Ovary (tissue), 10 donors: ENCODE measurements at regions of chr9 and their contacts with region 1.

Region 1: GRCh38 chr9:71819115-71819739 is 50.9 kb upstream of the CEMIP2 start:
- DNase-seq: peak in 4 of 5 donors; percentile 24 to 47 (median 30)
- H3K4me3 ChIP-seq: no peak overlapping the region
- H3K27ac ChIP-seq: no peak overlapping the region
- H3K4me1 ChIP-seq: peaks cover 9% of the 10 kb centered on the region
- H3K27me3 ChIP-seq: no peaks in the 10 kb centered on the region
- CTCF ChIP-seq: peak; percentile 59 to 66 (median 63)
- EP300 ChIP-seq: no peak
- POLR2A ChIP-seq: no peak

Region 2: DNA sequence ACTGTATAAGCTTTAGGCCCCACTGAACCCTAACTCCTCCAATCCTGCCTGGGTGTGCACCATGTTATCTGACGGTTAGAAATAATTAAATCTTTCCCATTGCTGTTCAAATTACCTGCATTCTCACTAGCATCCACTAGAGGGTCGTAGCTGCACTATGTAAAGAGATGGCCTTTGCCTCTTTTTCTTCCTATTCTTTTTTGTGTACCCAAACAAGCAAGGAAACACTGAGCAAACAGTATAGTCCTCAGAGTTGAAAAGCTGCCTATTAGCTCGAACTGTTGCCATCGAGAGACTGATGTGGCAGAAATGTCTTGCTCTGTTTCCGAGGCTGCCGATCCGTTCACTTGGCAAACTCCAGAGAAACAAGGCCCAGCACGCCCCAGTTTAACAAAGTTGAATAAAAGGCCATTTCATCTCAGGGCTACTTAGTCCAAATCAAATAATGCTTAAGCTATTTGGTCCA is 534.0 kb before region 1 on chr9:
- intact Hi-C with region 1: loop called in 1 of 4 experiments (anchors 10 kb)
- DNase-seq: no peak
- H3K4me3 ChIP-seq: no peak overlapping the region
- H3K27ac ChIP-seq: no peak overlapping the region
- H3K4me1 ChIP-seq: no peaks in the 10 kb centered on the region
- H3K27me3 ChIP-seq: no peaks in the 10 kb centered on the region
- CTCF ChIP-seq: peak; percentile 32 to 52 (median 46)
- EP300 ChIP-seq: no peak
- POLR2A ChIP-seq: no peak

Region 3: GRCh38 chr9:71562140-71562539 is 257.1 kb before region 1 on chr9:
- intact Hi-C with region 1: no loop called
- DNase-seq: no peak
- H3K4me3 ChIP-seq: no peak overlapping the region
- H3K27ac ChIP-seq: no peak overlapping the region
- H3K4me1 ChIP-seq: no peaks in the 10 kb centered on the region
- H3K27me3 ChIP-seq: no peaks in the 10 kb centered on the region
- CTCF ChIP-seq: no peak
- EP300 ChIP-seq: no peak
- POLR2A ChIP-seq: no peak

Region 4: GRCh38 chr9:71604197-71605063 is 214.8 kb before region 1 on chr9:
- intact Hi-C with region 1: loop called in 1 of 4 experiments (anchors 10 kb)
- DNase-seq: peak; percentile 51 to 68 (median 59)
- H3K4me3 ChIP-seq: no peak overlapping the region
- H3K27ac ChIP-seq: no peak overlapping the region
- H3K4me1 ChIP-seq: peaks cover 4% of the 10 kb centered on the region
- H3K27me3 ChIP-seq: no peaks in the 10 kb centered on the region
- CTCF ChIP-seq: peak in 2 of 3 donors; percentile 25 to 31
- EP300 ChIP-seq: no peak
- POLR2A ChIP-seq: no peak

Region 5: DNA sequence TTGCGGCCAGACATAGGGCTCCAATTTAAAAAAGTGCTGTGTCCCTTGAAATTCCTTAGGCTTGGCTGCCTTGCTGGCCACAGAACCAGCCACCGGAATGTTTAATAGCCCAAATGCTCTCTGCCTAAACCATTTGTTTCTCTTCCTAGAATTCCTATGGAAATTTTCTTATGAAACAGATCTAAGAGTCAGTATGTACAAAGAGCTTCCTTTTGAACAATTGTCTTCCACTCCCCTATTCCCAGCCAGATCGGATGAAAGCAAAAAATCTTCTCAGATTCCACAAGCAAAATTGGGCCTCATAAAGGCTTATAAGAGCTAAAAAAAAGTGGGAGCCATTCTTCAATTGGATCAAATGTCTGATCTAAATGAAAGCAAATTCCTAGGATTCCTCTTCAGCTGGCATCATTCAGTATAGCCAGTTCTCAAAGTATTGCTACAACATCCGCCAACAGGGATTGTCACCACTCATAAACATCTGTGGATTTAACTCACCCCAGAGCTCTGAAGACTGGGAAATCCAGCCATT is 155.2 kb before region 1 on chr9:
- intact Hi-C with region 1: no loop called
- DNase-seq: no peak
- H3K4me3 ChIP-seq: no peak overlapping the region
- H3K27ac ChIP-seq: no peak overlapping the region
- H3K4me1 ChIP-seq: no peaks in the 10 kb centered on the region
- H3K27me3 ChIP-seq: no peaks in the 10 kb centered on the region
- CTCF ChIP-seq: no peak
- EP300 ChIP-seq: no peak
- POLR2A ChIP-seq: no peak

Region 6: DNA sequence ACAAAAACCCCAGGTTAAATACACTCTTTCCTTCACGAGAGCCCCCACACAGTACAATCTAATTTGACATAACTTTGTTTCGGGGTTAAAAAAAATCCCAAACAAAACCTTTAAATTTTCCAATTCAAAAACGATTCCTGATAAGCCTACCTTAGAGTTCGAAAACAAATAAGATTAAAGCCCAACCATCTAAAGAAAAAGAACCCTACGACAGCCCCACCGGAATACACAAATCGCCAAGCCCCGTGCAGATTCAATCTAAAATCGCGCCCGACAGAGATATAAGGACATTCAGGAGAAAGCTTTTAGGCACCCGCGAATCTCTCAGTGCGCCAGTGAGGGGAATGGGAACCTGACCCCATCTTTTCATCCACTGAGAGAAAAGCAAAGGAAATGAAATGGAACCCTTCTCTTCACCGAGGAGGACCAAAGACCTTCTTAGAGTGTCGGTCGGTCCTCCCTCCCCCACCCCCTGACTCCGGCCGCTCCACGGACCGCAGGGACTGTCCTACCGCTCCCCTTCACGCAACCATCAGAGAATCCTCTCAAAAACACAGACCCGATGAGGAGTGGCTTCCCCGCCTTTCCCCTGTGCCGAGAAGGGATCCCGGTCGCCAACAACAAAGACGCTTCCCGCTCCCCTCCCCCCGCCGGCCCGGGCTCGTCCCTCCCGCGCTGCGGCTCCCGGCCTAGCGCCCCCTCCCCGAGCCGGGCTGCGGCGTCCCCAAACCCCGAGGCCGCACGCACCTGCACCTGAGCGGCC is 90.8 kb after region 1 on chr9:
- intact Hi-C with region 1: loop called in 1 of 4 experiments (anchors 10 kb)
- DNase-seq: peak; percentile 58 to 75 (median 73)
- H3K4me3 ChIP-seq: peak overlapping the region; percentile 68
- H3K27ac ChIP-seq: peak overlapping the region; percentile 63 to 90
- H3K4me1 ChIP-seq: peaks cover 3% of the 10 kb centered on the region
- H3K27me3 ChIP-seq: no peaks in the 10 kb centered on the region
- CTCF ChIP-seq: no peak
- EP300 ChIP-seq: no peak
- POLR2A ChIP-seq: no peak

Region 7: GRCh38 chr9:72013292-72013760 is 194.1 kb after region 1 on chr9:
- intact Hi-C with region 1: loop called in 1 of 4 experiments (anchors 10 kb)
- DNase-seq: no peak
- H3K4me3 ChIP-seq: no peak overlapping the region
- H3K27ac ChIP-seq: no peak overlapping the region
- H3K4me1 ChIP-seq: no peaks in the 10 kb centered on the region
- H3K27me3 ChIP-seq: no peaks in the 10 kb centered on the region
- CTCF ChIP-seq: no peak
- EP300 ChIP-seq: no peak
- POLR2A ChIP-seq: no peak

Region 8: GRCh38 chr9:72025931-72026342 is 206.7 kb after region 1 on chr9:
- intact Hi-C with region 1: no loop called
- DNase-seq: no peak
- H3K4me3 ChIP-seq: no peak overlapping the region
- H3K27ac ChIP-seq: no peak overlapping the region
- H3K4me1 ChIP-seq: no peaks in the 10 kb centered on the region
- H3K27me3 ChIP-seq: no peaks in the 10 kb centered on the region
- CTCF ChIP-seq: no peak
- EP300 ChIP-seq: no peak
- POLR2A ChIP-seq: no peak

Region 9: GRCh38 chr9:72232778-72233177 is 413.6 kb after region 1 on chr9:
- intact Hi-C with region 1: no loop called
- DNase-seq: no peak
- H3K4me3 ChIP-seq: no peak overlapping the region
- H3K27ac ChIP-seq: no peak overlapping the region
- H3K4me1 ChIP-seq: no peaks in the 10 kb centered on the region
- H3K27me3 ChIP-seq: no peaks in the 10 kb centered on the region
- CTCF ChIP-seq: no peak
- EP300 ChIP-seq: no peak
- POLR2A ChIP-seq: no peak